Heart left ventricle (tissue), 16 donors: ENCODE measurements at regions of chr4 and their contacts with region 1.

Region 1: GRCh38 chr4:121800961-121801714 is at the start of gene EXOSC9:
- DNase-seq: peak; percentile 95 to 97 (median 95)
- ATAC-seq: peak; percentile 96 to 98 (median 98)
- H3K4me3 ChIP-seq: peak within 1 kb of the TSS; percentile 65 to 98 (median 85)
- H3K27ac ChIP-seq: peak within 1 kb of the TSS; percentile 73 to 95 (median 91)
- H3K4me1 ChIP-seq: peaks cover 0 to 30% (median 11%) of the 10 kb centered on the region in 12 donors
- H3K27me3 ChIP-seq: no peaks in the 10 kb centered on the region
- CTCF ChIP-seq: no peak
- POLR2A ChIP-seq: peak in 1 of 2 donors; percentile 72
- total RNA-seq, gene EXOSC9: 12.2 to 23.6 (median 15.7) TPM

Region 2: DNA sequence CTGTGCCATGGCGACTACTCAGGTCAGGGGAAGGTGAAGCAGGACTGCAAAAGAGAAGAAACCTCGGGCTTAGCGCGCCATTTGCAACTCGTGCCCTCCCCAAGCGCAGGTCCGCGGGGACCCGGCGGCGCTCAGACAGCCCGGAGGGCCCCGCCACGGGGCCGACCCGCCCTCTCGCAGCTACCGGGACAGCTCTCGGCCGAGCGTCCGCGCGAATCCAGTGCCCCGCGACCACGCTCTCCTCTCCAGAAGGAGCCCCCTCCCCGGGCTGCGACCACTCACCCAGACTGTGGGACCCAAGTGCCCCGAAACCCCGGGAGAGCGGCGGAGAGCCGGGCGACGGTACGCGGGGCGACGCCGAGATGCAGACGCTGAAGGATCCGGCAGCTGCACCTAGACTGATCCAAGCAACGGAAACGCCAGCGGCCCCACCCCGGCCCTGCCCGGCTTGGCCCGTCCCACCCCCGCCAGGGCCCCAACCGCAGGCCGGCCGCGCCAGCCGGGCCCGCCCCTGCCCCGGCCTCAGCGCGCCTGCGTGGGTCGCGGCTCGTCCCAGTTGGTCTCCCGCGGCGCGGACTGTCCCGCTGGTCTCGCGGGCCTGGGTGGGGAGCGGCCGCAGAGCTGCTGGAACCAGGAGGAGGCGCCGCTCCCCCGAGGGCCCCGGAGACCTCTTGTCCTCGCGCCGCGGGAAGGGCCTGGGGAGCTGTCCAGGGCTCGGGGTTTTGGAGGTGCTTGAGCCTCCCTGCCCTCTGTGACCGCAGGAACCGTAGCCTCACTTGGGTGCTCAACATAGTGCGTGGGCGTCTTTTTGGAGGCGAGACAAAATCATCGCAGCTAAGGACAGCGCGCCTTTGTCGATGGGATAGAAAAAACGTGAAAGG is 104.3 kb before region 1 on chr4 and contains the start of gene ANXA5:
- intact Hi-C with region 1: loop called in 2 of 10 experiments (anchors 1 to 2 kb)
- DNase-seq: peak; percentile 90 to 96 (median 94)
- ATAC-seq: peak; percentile 91 to 99 (median 96)
- H3K4me3 ChIP-seq: peak within 1 kb of the TSS; percentile 80 to 99 (median 96)
- H3K27ac ChIP-seq: peak within 1 kb of the TSS; percentile 89 to 99 (median 98)
- H3K4me1 ChIP-seq: peaks cover 0 to 54% (median 32%) of the 10 kb centered on the region in 12 donors
- H3K27me3 ChIP-seq: no peaks in the 10 kb centered on the region
- CTCF ChIP-seq: peak in 11 of 12 donors; percentile 12 to 63 (median 44)
- POLR2A ChIP-seq: peak; percentile 12 to 71
- total RNA-seq, gene ANXA5: 108 to 283 (median 168) TPM

Region 3: GRCh38 chr4:121823505-121824170 is 22.5 kb after region 1 on chr4 and contains the start of gene CCNA2:
- intact Hi-C with region 1: loop called in 2 of 10 experiments (anchors 1 to 2 kb)
- DNase-seq: peak; percentile 96 to 98 (median 97)
- ATAC-seq: peak; percentile 100
- H3K4me3 ChIP-seq: peak within 1 kb of the TSS; percentile 22 to 73 (median 64)
- H3K27ac ChIP-seq: peak within 1 kb of the TSS in 11 of 12 donors; percentile 63 to 87 (median 81)
- H3K4me1 ChIP-seq: peaks cover 0 to 25% (median 7%) of the 10 kb centered on the region in 12 donors
- H3K27me3 ChIP-seq: no peaks in the 10 kb centered on the region
- CTCF ChIP-seq: peak in 3 of 12 donors; percentile 5 to 23 (median 22)
- POLR2A ChIP-seq: peak in 1 of 2 donors; percentile 46
- total RNA-seq, gene CCNA2: 0.09 to 9.4 (median 0.49) TPM in 8 of 9 donors, not detected in the other

Region 4: DNA sequence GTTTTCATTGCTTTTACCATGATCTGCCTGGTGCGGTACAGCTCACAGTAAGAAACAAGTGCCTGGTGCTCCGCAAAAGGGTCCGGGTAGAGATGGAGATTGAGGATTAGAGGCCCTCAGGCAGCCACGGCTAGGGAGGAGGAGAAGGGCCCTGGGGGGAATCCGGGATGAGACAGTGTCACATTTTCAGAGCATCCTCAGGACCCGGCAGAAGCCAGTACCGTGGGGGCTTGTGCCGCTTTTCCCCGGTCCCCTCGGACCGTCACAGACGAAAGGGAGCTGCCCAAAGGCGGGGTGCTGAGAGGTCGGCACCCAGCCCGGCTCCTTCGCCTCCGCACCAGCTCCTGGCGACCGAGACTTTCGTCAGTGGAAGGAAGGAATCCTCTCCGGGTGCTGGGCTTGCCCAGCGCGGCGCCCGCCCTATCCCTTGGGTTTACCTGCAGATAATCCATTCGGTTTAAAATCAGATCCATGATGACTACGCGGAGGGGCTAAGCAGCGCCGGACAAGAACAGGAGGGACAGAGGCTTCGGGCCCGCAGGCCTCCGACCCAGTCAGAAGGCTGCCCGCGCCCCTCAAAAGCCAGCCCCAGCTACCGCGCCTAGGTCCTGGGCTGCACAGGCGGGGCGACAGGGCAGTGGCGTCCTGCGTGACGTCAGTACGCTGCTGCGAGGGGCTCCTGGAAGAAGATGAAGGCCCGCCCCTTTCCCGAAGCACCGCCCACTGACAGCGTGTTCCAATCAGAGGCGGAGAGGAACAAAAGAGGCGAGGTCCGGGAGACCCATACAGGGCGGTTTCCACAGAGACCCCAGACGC is 68.9 kb after region 1 on chr4 and contains the start of gene BBS7:
- intact Hi-C with region 1: loop called in 1 of 10 experiments (anchors 5 kb)
- DNase-seq: peak; percentile 97 to 99 (median 98)
- ATAC-seq: peak; percentile 99 to 100 (median 100)
- H3K4me3 ChIP-seq: peak within 1 kb of the TSS; percentile 59 to 96 (median 84)
- H3K27ac ChIP-seq: peak within 1 kb of the TSS; percentile 26 to 93 (median 84)
- H3K4me1 ChIP-seq: peaks cover 0 to 11% (median 2%) of the 10 kb centered on the region in 12 donors
- H3K27me3 ChIP-seq: peaks cover 0 to 4% (median 0%) of the 10 kb centered on the region in 9 donors
- CTCF ChIP-seq: no peak
- POLR2A ChIP-seq: peak in 1 of 2 donors; percentile 83
- total RNA-seq, gene BBS7: 3.3 to 7.8 (median 4.9) TPM